Keratinocyte (primary cell): ENCODE measurements at regions of chr5 and their contacts with region 1.

Region 1: GRCh38 chr5:154405078-154405792 is 40.6 kb upstream of the SAP30L start:
- DNase-seq: no peak
- H3K4me3 ChIP-seq: peak overlapping the region in 2 of 3 experiments; percentile 29 to 49
- H3K27ac ChIP-seq: no peak overlapping the region
- H3K4me1 ChIP-seq: no peaks in the 10 kb centered on the region
- H3K27me3 ChIP-seq: no peaks in the 10 kb centered on the region
- CTCF ChIP-seq: peak; percentile 78 to 97 (median 97)

Region 2: GRCh38 chr5:154072414-154073171 is 332.6 kb before region 1 on chr5:
- dilution Hi-C with region 1: loop called (anchors 25 kb)
- DNase-seq: no peak
- H3K4me3 ChIP-seq: peak overlapping the region in 1 of 3 experiments; percentile 36
- H3K27ac ChIP-seq: no peak overlapping the region
- H3K4me1 ChIP-seq: no peaks in the 10 kb centered on the region
- H3K27me3 ChIP-seq: peaks cover 6% of the 10 kb centered on the region
- CTCF ChIP-seq: peak; percentile 83 to 97 (median 94)